Calu3 (cell line): ENCODE measurements at regions of chr13 and their contacts with region 1.

Region 1: DNA sequence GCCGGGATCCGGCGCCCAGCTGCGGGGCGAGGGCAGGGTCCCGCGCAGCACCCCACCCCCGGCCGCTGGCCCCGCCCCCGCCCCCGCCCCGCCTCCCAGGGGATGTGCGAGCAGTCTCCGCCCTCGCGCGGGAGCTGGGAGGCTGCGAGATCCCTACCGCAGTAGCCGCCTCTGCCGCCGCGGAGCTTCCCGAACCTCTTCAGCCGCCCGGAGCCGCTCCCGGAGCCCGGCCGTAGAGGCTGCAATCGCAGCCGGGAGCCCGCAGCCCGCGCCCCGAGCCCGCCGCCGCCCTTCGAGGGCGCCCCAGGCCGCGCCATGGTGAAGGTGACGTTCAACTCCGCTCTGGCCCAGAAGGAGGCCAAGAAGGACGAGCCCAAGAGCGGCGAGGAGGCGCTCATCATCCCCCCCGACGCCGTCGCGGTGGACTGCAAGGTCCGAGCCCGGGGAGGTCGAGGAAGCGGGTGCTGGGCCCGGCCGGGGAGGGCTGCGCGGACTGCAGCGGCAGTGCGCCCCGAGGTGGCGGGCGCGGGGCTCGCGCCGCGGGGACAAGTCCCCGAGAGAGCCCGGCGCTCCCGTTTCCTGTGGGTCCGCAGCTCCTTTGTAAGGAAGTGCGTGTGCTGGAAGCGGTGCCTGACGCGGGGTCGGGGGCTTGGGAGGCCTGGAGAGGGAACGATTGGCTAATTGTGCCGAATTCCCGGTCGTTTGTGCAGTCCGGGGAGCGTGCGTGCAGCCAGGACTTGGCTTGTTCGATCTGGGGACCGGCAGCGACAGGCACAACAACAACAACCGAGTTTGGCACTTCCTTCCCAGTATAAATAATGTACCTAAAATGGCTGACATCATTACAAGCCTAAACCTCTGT is at the start of gene ITM2B:
- DNase-seq: peak; percentile 58
- H3K4me3 Mint-ChIP-seq: peak within 1 kb of the TSS; percentile 74
- H3K27ac Mint-ChIP-seq: peak within 1 kb of the TSS; percentile 84
- H3K4me1 Mint-ChIP-seq: peaks cover 38% of the 10 kb centered on the region
- H3K27me3 Mint-ChIP-seq: no peaks in the 10 kb centered on the region
- CTCF ChIP-seq: peak; percentile 22
- total RNA-seq, gene ITM2B: 357 and 362 TPM in 2 replicates

Region 2: GRCh38 chr13:48126944-48127830 is 106.1 kb before region 1 on chr13:
- CTCF ChIA-PET with region 1: interaction called, 3 read pairs
- intact Hi-C with region 1: loop called (anchors 2 kb)
- DNase-seq: peak; percentile 20
- H3K4me3 Mint-ChIP-seq: no peak overlapping the region
- H3K27ac Mint-ChIP-seq: no peak overlapping the region
- H3K4me1 Mint-ChIP-seq: peaks cover 8% of the 10 kb centered on the region
- H3K27me3 Mint-ChIP-seq: no peaks in the 10 kb centered on the region
- CTCF ChIP-seq: peak; percentile 41

Region 3: GRCh38 chr13:48138270-48138669 is 95.0 kb before region 1 on chr13:
- CTCF ChIA-PET with region 1: no interaction called
- intact Hi-C with region 1: no loop called
- DNase-seq: no peak
- H3K4me3 Mint-ChIP-seq: no peak overlapping the region
- H3K27ac Mint-ChIP-seq: no peak overlapping the region
- H3K4me1 Mint-ChIP-seq: no peaks in the 10 kb centered on the region
- H3K27me3 Mint-ChIP-seq: no peaks in the 10 kb centered on the region
- CTCF ChIP-seq: no peak

Region 4: GRCh38 chr13:48155848-48156247 is 77.4 kb before region 1 on chr13:
- CTCF ChIA-PET with region 1: interaction called, 3 read pairs
- intact Hi-C with region 1: loop called (anchors 10 kb)
- DNase-seq: no peak
- H3K4me3 Mint-ChIP-seq: no peak overlapping the region
- H3K27ac Mint-ChIP-seq: peak overlapping the region; percentile 71
- H3K4me1 Mint-ChIP-seq: peaks cover 69% of the 10 kb centered on the region
- H3K27me3 Mint-ChIP-seq: no peaks in the 10 kb centered on the region
- CTCF ChIP-seq: no peak